ENCODE measurements at regions of chr7 and their contacts with region 1.

Region 1: DNA sequence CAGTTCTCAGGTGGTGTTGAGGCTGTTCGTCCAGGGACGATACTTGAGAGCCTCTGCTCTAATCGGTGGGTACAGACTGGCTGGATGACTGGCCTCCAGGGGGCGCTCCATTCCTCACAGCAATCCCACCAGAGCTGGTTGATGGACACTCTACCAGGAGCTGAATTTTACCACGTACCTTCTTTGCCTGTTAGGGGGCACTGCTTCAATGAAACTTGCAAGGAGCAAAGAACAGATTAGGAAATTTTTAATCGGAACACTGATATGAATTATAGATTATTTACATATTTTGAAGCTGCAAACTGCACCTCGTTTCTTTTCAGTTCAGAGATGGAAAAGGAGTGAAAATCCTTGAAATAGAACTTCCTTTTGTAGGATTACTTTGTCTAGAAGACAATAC is 44.9 kb downstream of the KBTBD2 start:
- DNase-seq: peak; percentile 91 to 96
- ATAC-seq: peak; percentile 94
- H3K4me3 ChIP-seq: no peak overlapping the region
- H3K27ac ChIP-seq: no peak overlapping the region
- H3K4me1 ChIP-seq: no peaks in the 10 kb centered on the region
- H3K27me3 ChIP-seq: no peaks in the 10 kb centered on the region

Region 2: DNA sequence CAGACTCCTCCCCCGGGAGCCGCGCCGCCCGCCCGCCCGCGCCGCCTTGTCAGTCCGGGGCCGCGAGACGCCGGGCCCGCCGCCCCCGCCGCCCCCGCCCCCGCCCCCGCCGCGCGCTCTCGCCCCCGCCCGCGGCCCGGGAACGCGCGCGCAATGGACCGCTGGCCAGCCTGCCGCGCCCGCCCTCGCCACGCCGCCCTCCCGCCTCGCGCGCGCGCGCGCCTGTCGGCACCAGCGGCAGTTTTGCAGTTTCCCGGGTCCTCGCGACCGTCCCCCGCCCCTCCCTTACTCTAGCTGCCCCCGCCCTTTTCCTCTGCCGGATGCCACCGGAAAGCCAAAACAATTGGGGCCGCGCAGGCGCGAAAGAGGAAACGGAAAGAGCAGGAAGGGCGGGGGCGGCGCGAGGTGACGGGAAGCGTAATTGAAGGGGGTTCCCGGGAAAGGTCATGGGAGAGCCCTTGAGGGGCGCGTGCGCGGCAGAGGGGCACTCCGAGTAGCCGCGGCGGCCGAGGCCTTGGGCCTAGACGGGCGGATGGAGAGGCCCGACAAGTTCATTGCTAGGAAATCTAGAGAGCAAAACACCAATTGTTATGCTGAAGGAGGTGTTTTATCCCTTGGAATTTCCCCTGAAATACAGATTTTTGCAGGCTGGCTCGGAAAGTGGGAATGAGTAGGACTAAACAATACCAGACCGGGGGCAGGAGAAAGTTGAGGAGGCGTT is 45.3 kb after region 1 on chr7:
- intact Hi-C with region 1: no loop called
- DNase-seq: peak; percentile 99
- ATAC-seq: peak; percentile 95
- H3K4me3 ChIP-seq: peak overlapping the region; percentile 81 to 99
- H3K27ac ChIP-seq: peak overlapping the region; percentile 91 to 95
- H3K4me1 ChIP-seq: no peaks in the 10 kb centered on the region
- H3K27me3 ChIP-seq: no peaks in the 10 kb centered on the region

Region 3: DNA sequence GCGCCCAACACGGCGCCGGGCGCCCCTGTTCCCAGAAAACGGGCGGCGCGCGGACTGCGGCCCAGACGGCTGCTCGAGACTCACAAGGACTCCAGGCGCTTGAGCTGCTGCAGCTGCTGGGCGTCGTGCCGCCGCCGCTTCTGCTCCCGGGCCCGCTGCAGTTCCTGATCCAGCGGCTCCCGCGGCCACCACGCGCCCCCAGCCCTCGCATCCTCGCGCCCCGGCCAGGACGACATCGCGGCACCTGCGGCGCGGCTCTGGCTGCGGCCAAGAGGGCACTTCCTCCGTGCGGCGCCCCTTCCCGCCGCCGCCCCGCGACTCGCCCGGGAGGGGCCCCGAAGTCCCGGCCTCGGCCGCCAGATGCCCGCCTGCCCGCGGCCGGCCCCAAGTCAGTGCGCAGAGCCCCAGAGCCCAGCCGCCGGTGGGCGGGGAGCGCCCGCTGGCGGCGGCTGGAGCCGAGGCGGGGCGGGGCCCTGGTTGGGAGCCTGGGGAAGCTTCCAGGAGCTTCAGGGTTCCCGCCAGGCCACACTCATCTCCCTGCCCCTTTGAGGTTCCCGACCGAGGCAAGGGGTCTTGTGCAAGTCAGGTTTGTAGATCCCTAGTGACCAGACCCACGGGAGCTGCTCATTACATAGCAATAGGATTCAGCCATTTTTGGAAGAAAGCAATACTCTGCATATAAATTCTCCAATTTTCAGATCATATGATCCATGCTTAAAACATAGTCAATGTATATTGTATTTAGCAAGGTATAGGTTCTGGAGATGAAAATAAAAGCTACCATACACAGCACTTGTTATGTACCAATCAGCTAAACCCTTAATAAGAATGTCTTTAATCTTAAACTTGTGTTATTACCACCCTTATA is 96.3 kb after region 1 on chr7:
- intact Hi-C with region 1: loop called in 1 of 2 experiments (anchors 2 kb)
- DNase-seq: peak; percentile 86 to 93
- ATAC-seq: peak; percentile 97
- H3K4me3 ChIP-seq: peak overlapping the region; percentile 61 to 92
- H3K27ac ChIP-seq: peak overlapping the region; percentile 0 to 85
- H3K4me1 ChIP-seq: no peaks in the 10 kb centered on the region
- H3K27me3 ChIP-seq: no peaks in the 10 kb centered on the region